HEK293T (cell line): ENCODE measurements at regions of chr7 and their contacts with region 1.

Region 1: GRCh38 chr7:142496545-142497041 is 238.7 kb upstream of the PRSS58 start:
- DNase-seq: peak; percentile 66

Region 2: GRCh38 chr7:142482891-142483658 is 13.5 kb before region 1 on chr7:
- CTCF ChIA-PET with region 1: interaction called, 12 read pairs
- POLR2A ChIA-PET with region 1: no interaction called
- DNase-seq: peak; percentile 62

Region 3: DNA sequence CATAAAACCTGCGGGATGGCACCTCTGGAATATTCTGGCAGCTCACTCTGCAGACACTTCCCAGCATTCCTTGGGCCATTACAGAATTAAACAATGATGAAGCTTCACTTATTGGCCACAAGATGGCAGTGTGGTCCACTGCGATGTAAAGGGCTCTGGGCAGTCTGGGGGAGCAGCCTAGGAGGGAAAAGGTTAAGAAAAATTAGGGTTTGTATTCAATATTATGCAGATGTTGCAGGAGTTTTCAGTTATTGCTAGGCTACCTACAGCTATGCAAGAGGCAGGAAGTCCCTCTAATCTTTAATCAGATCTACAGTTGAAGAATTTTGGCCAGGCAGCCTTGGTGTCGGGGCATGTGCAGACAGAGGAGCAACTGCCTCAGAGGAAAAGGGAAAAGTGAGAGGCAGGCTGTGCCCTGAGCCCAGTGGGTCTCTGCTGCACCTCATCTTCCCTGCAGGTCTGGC is 19.5 kb after region 1 on chr7:
- CTCF ChIA-PET with region 1: interaction called, 10 read pairs
- POLR2A ChIA-PET with region 1: no interaction called
- DNase-seq: peak; percentile 65

Region 4: DNA sequence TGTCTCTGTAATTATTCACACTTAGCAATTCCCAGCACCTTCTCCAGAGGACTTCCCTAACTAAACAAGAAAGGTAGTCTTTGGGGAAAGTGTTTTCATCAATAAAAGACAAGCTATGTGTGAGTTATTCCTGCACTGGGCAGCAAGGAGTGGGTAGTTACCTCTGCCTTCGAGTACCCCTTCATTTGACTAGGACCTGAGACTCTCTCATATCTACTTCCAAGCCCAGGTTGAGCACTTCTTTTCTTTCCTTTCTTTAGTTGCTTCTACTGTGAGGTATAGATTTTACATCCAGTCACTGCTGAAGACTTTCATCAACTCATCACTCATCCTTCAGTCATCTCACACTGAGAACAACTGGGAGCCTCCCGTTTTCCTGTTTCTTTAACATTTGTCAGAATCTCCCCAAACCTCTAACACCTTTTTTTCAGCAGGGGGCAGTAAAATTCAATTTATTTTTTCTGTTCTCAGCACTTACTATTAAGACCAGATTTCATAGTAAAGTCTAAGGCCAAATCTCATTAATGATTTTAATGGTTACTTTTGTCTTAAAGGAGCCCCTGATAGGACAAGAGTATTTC is 172.6 kb after region 1 on chr7:
- CTCF ChIA-PET with region 1: no interaction called
- POLR2A ChIA-PET with region 1: no interaction called
- DNase-seq: no peak